Activated CD4-positive, alpha-beta T cell treated with anti-CD3 and anti-CD28 coated beads, Interleukin-2, amount 10 ng/mL, durations not matched to agents 24 days and 14 days (primary cell): ENCODE measurements at regions of chr5 and their contacts with region 1.

Region 1: DNA sequence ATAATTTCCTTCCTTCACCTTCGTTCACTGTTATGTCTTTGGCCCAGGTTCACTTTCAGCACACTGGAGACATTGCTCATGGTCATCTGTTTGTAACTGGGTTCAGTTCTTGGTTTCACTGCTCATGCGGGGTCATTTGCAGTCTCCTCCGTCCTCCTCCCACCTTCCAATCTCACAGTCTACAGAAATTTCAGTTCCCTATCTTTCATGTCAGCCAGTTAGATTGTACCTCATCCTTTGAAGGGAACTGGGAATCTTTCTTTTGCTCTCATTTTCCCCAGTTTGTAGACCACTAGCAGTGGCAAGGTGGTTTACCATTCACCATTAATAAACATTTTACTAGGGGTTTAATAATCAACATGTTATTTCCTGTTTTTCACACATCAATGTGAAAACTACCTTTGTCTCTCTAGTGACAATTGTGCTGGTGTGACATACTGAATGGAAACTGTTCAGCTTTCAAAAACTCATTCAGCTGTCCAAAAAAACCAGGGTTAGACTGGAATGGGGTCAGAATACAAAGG is 100.9 kb upstream of the IL6ST start:
- DNase-seq: no peak
- H3K4me3 Mint-ChIP-seq: peak overlapping the region; percentile 28
- H3K27ac Mint-ChIP-seq: peak overlapping the region; percentile 12
- H3K4me1 Mint-ChIP-seq: peaks cover 64% of the 10 kb centered on the region
- H3K27me3 Mint-ChIP-seq: no peaks in the 10 kb centered on the region

Region 2: DNA sequence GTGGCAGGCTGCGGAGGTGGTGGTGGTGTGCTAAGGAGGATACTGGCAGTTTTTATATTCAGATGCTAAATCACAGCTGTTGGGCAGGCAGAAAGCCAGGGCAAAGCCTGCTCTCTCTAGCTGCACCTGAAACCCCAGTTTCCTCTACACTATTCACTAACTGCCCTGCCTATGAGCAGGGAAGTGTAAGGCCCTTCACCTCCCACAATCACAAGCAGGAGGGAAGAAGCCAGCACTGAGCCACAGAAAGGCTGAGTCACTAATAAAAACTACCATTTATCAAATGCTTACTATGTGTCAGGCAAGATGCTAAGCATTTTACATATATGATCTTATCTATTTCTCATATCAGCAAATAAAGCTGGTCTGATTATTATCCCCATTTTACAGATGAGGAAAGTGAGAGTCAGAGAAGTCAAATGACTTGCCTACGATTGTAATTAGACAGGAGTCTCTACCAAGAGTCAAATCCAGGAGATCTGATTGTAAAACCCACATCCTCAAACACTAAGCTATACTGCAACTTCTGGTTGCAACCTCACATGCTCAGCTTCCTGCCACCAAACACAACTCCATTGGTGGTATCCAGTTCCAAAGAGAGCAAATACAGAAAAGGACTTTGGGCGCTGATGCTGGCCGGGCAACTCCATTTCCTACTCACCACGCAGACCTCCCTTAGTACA is 83.2 kb before region 1 on chr5:
- intact Hi-C with region 1: loop called (anchors 1 kb)
- DNase-seq: peak; percentile 84
- H3K4me3 Mint-ChIP-seq: peak overlapping the region; percentile 47
- H3K27ac Mint-ChIP-seq: peak overlapping the region; percentile 47
- H3K4me1 Mint-ChIP-seq: peaks cover 28% of the 10 kb centered on the region
- H3K27me3 Mint-ChIP-seq: no peaks in the 10 kb centered on the region

Region 3: GRCh38 chr5:56026863-56027300 is 68.8 kb before region 1 on chr5:
- intact Hi-C with region 1: loop called (anchors 2 kb)
- DNase-seq: no peak
- H3K4me3 Mint-ChIP-seq: no peak overlapping the region
- H3K27ac Mint-ChIP-seq: no peak overlapping the region
- H3K4me1 Mint-ChIP-seq: peaks cover 10% of the 10 kb centered on the region
- H3K27me3 Mint-ChIP-seq: peaks cover 23% of the 10 kb centered on the region

Region 4: DNA sequence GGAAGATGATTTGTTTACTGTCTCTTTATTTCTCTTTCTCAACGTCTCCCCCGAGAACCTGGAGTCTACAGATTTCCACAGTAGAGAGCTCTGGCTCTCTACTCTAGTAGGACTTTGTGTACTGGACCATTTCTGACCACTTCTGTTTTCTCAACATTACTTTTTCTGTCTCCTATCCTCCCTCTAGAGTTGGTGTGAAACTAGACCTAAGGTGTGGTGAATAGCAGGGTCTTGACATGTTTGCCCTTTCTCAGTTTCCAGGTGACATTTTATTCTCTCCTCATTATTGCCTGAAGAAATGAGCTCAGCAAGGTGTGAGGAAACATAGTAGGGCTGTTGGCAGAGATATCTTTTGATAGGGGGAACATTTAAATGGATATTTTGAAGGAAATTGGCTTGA is 38.8 kb before region 1 on chr5:
- intact Hi-C with region 1: loop called (anchors 2 kb)
- DNase-seq: no peak
- H3K4me3 Mint-ChIP-seq: no peak overlapping the region
- H3K27ac Mint-ChIP-seq: peak overlapping the region; percentile 46
- H3K4me1 Mint-ChIP-seq: peaks cover 51% of the 10 kb centered on the region
- H3K27me3 Mint-ChIP-seq: peaks cover 4% of the 10 kb centered on the region

Region 5: GRCh38 chr5:56080375-56081052 is 15.1 kb before region 1 on chr5:
- intact Hi-C with region 1: loop called (anchors 2 kb)
- DNase-seq: peak; percentile 71
- H3K4me3 Mint-ChIP-seq: no peak overlapping the region
- H3K27ac Mint-ChIP-seq: peak overlapping the region; percentile 65
- H3K4me1 Mint-ChIP-seq: peaks cover 28% of the 10 kb centered on the region
- H3K27me3 Mint-ChIP-seq: peaks cover 2% of the 10 kb centered on the region

Region 6: DNA sequence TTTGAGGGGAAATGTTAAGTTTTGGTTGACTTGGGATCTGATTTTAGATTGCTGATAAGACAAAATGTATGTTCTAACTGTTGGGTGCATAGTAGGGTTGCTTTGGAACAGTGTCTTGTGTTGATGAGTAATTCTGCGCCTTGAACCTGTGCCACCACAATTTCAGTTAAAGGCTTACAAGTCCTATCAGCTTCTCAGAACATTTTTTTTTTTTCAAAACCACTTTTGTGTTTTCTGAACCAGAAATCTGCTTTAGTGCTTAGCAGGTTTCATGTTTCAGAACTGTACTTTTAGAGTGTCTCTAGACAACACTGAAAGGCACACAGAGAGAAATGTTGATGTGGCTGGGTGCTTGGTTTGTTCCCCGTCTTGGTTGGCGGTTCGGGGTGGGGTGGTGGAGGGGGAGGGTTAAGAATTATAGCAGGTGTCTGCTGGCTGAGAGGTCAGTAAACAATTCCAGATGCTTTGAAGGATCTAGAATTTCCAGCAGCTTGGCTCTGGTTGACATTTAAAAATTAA is 52.9 kb after region 1 on chr5:
- intact Hi-C with region 1: loop called (anchors 2 kb)
- DNase-seq: peak; percentile 88
- H3K4me3 Mint-ChIP-seq: peak overlapping the region; percentile 21
- H3K27ac Mint-ChIP-seq: peak overlapping the region; percentile 83
- H3K4me1 Mint-ChIP-seq: peaks cover 38% of the 10 kb centered on the region
- H3K27me3 Mint-ChIP-seq: no peaks in the 10 kb centered on the region

Region 7: DNA sequence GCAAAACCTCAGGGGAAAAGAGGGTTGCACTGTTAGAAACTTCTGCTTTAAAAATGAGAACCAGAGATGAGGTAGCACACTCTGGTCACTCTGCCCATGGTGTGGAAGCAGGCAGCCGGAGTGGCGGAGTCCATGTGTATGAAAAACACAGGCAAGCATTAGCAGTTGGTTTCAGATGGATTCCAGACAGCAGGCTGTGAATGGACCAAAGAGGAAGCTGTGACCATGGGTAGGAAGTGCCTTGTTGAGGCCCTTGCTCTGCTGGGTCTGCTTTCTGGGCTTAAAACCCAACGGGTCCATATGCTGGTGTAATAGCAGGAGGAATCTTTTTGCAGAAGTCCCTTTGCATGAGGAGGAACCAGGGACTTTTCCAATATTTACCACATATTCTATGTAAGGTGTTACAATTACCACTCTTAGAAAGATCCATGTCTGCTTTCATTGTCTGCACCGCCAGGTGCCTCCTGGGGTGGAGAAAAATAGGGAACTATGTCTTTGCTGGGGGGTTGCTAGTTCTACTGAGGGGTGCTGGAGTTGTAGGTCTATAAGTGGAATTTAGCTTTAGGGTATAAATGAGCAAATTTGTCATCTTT is 60.4 kb after region 1 on chr5:
- intact Hi-C with region 1: loop called (anchors 1 kb)
- DNase-seq: peak; percentile 66
- H3K4me3 Mint-ChIP-seq: peak overlapping the region; percentile 44
- H3K27ac Mint-ChIP-seq: peak overlapping the region; percentile 92
- H3K4me1 Mint-ChIP-seq: peaks cover 74% of the 10 kb centered on the region
- H3K27me3 Mint-ChIP-seq: no peaks in the 10 kb centered on the region